H1 (cell line): ENCODE measurements at regions of chr2 and their contacts with region 1.

Region 1: GRCh38 chr2:172972005-172972619 is 103.5 kb upstream of the MAP3K20 start:
- DNase-seq: peak in 1 of 2 experiments; percentile 79
- H3K4me3 ChIP-seq: no peak overlapping the region
- H3K27ac ChIP-seq: no peak overlapping the region
- H3K4me1 ChIP-seq: no peaks in the 10 kb centered on the region; a peak in 1 of 7 replicates
- H3K27me3 ChIP-seq: no peaks in the 10 kb centered on the region; a peak in 1 of 7 replicates
- CTCF ChIP-seq: peak; percentile 73 to 84 (median 79)
- EP300 ChIP-seq: no peak
- POLR2A ChIP-seq: no peak
- RAD21 ChIP-seq: peak; percentile 60 to 66

Region 2: GRCh38 chr2:172944022-172944793 is 27.9 kb before region 1 on chr2:
- CTCF ChIA-PET with region 1: no interaction called
- POLR2A ChIA-PET with region 1: no interaction called
- DNase-seq: no peak
- H3K4me3 ChIP-seq: no peak overlapping the region
- H3K27ac ChIP-seq: no peak overlapping the region
- H3K4me1 ChIP-seq: peaks cover 0 to 8% (median 2%) of the 10 kb centered on the region in 4 experiments; a peak in 2 of 7 replicates
- H3K27me3 ChIP-seq: no peaks in the 10 kb centered on the region
- CTCF ChIP-seq: no peak
- EP300 ChIP-seq: no peak
- POLR2A ChIP-seq: no peak
- RAD21 ChIP-seq: no peak

Region 3: GRCh38 chr2:172985139-172985901 is 13.2 kb after region 1 on chr2:
- CTCF ChIA-PET with region 1: interaction called, 10 read pairs
- POLR2A ChIA-PET with region 1: no interaction called
- DNase-seq: no peak
- H3K4me3 ChIP-seq: no peak overlapping the region
- H3K27ac ChIP-seq: no peak overlapping the region
- H3K4me1 ChIP-seq: no peaks in the 10 kb centered on the region
- H3K27me3 ChIP-seq: no peaks in the 10 kb centered on the region
- CTCF ChIP-seq: no peak
- EP300 ChIP-seq: no peak
- POLR2A ChIP-seq: no peak
- RAD21 ChIP-seq: no peak